Mammary epithelial cell (primary cell): ENCODE measurements at regions of chr18 and their contacts with region 1.

Region 1: DNA sequence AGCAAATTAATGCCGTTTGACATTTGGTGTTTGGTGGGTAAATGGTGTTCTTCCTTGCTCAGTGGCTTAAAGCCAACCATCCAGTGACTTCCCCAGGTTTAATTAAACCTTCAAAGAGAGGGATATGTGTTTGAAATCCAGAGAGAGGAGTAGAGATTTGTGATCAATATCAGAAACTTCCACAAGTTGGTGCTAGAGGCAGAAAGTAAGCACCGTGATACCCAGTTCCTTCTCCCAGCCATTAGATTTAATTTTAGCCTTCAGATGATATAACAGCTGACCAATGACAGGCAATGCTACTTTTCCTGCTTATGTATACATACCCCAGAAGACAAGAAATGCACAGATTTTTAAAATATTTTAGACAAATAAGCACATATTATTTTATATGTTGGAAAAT is 398.5 kb downstream of the CDH2 start:
- DNase-seq: peak; percentile 4
- H3K4me3 ChIP-seq: no peak overlapping the region
- H3K27ac ChIP-seq: no peak overlapping the region
- H3K4me1 ChIP-seq: no peaks in the 10 kb centered on the region
- H3K27me3 ChIP-seq: no peaks in the 10 kb centered on the region
- CTCF ChIP-seq: peak; percentile 45 to 78

Region 2: GRCh38 chr18:27976806-27977408 is 198.5 kb after region 1 on chr18:
- CTCF ChIA-PET with region 1: no interaction called
- dilution Hi-C with region 1: no loop called
- in situ Hi-C with region 1: no loop called
- intact Hi-C with region 1: no loop called
- DNase-seq: no peak
- H3K4me3 ChIP-seq: no peak overlapping the region
- H3K27ac ChIP-seq: no peak overlapping the region
- H3K4me1 ChIP-seq: no peaks in the 10 kb centered on the region
- H3K27me3 ChIP-seq: peaks cover 4% of the 10 kb centered on the region
- CTCF ChIP-seq: no peak

Region 3: DNA sequence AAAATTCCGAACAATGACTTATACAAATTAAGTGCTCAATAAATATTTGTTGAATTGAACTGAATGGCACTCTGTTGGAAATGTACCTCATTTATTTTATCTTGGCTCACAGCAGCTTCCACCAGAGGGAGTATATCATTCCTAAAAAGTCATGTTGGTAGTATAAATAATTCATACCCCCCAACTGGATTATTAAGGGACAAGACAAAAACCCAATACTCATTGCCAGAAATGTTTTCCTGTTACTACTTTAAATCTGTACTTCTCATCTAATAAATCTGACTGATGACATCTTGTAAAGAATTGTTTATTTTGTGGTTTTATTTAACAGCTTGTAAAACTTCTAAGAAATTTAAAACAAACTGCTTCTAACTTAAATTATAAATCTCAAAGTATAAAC is 234.6 kb after region 1 on chr18:
- CTCF ChIA-PET with region 1: no interaction called
- dilution Hi-C with region 1: no loop called
- in situ Hi-C with region 1: no loop called
- intact Hi-C with region 1: loop called (anchors 5 kb)
- DNase-seq: no peak
- H3K4me3 ChIP-seq: no peak overlapping the region
- H3K27ac ChIP-seq: no peak overlapping the region
- H3K4me1 ChIP-seq: no peaks in the 10 kb centered on the region
- H3K27me3 ChIP-seq: peaks cover 2% of the 10 kb centered on the region
- CTCF ChIP-seq: peak; percentile 5 to 32

Region 4: DNA sequence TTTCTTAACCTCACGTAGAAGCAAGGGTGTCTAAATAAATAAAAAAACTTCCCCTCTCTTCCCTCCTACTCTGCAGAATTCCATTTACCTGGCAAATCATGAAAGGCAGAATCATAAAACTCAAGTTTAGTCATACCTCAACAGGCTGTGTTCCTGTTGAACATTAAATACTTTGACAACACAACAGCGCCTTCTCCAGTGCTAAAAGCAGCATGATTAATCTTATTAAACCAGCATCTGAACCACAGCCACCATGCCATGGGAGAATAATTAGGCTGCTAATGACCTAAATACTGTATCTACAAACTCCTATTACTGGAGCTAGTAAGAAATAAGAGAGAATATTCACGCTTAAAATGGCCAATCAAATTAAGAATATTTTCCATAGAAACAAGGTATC is 330.4 kb after region 1 on chr18:
- CTCF ChIA-PET with region 1: no interaction called
- dilution Hi-C with region 1: no loop called
- in situ Hi-C with region 1: no loop called
- intact Hi-C with region 1: loop called (anchors 1 kb)
- DNase-seq: peak; percentile 33
- H3K4me3 ChIP-seq: no peak overlapping the region
- H3K27ac ChIP-seq: no peak overlapping the region
- H3K4me1 ChIP-seq: no peaks in the 10 kb centered on the region
- H3K27me3 ChIP-seq: no peaks in the 10 kb centered on the region
- CTCF ChIP-seq: peak in 1 of 2 donors; percentile 26